ENCODE measurements at regions of chr11 and their contacts with region 1.

Region 1: GRCh38 chr11:1832211-1832919 is 2.4 kb upstream of the SYT8 start:
- DNase-seq: peak in 1 of 2 donors; percentile 73
- ATAC-seq: peak; percentile 74 to 85 (median 80)
- H3K4me3 ChIP-seq: peak overlapping the region in 8 of 10 donors; percentile 8 to 35 (median 28)
- H3K27ac ChIP-seq: peak overlapping the region in 3 of 10 donors; percentile 21 to 37 (median 26)
- H3K4me1 ChIP-seq: peaks cover 1 to 20% (median 11%) of the 10 kb centered on the region in 9 donors
- H3K27me3 ChIP-seq: peaks cover 0 to 40% (median 12%) of the 10 kb centered on the region in 7 donors
- CTCF ChIP-seq: peak; percentile 94 to 100 (median 98)

Region 2: GRCh38 chr11:1652771-1653540 is 179.4 kb before region 1 on chr11:
- intact Hi-C with region 1: loop called in 9 of 10 experiments (anchors 1 to 5 kb)
- DNase-seq: peak; percentile 66 to 79
- ATAC-seq: peak; percentile 80 to 92 (median 85)
- H3K4me3 ChIP-seq: no peak overlapping the region
- H3K27ac ChIP-seq: no peak overlapping the region
- H3K4me1 ChIP-seq: peaks cover 0 to 6% (median 4%) of the 10 kb centered on the region in 9 donors
- H3K27me3 ChIP-seq: peaks cover 0 to 31% (median 11%) of the 10 kb centered on the region in 7 donors
- CTCF ChIP-seq: peak; percentile 94 to 99 (median 98)

Region 3: DNA sequence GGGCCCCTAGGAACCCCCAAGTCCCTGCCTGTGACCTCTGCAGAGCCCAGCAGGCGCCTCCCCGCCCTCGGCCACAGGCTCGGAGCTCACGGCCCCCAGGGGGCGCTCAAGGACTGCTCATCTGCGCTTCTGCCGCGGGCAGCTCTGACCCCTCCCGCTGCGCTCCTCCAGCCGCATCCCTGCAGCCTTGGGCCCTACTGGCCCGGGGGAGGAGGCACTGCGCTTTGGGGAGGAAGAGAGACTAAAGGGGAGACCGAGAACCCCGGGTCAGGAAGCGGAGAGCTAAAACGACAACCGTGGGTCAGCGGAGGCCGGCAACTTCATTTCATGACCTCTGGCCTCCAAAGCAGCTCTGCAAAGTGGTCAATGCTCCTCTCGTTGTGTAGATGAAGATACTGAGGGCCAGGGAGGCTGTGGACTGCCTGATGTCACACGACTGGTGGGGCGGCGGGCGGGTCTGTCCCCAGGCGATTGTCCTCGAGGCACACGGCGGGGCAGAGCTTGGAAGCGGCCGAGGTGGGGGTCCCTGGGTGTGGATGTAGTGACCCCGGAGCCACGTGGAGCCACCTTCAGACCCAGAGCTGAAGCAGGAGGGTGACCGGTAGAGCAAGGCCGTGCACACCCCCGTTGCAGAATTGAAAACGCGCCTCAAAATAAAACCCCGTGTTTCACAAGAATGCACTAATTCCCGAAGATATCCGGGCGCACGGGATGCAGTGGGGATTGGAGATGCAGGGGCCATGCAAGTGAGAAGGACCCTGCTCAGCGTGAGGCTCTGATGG is 138.1 kb before region 1 on chr11:
- intact Hi-C with region 1: loop called (anchors 1 to 2 kb)
- DNase-seq: peak; percentile 89 to 94
- ATAC-seq: peak; percentile 95 to 99 (median 97)
- H3K4me3 ChIP-seq: peak overlapping the region in 9 of 10 donors; percentile 26 to 64 (median 48)
- H3K27ac ChIP-seq: peak overlapping the region; percentile 3 to 80 (median 71)
- H3K4me1 ChIP-seq: peaks cover 5 to 15% (median 9%) of the 10 kb centered on the region in 9 donors
- H3K27me3 ChIP-seq: peaks cover 0 to 22% (median 0%) of the 10 kb centered on the region in 7 donors
- CTCF ChIP-seq: peak; percentile 93 to 99 (median 95)

Region 4: GRCh38 chr11:1706634-1707400 is 125.5 kb before region 1 on chr11:
- intact Hi-C with region 1: loop called in 2 of 10 experiments (anchors 1 to 5 kb)
- DNase-seq: no peak
- ATAC-seq: peak in 7 of 8 donors; percentile 42 to 85 (median 66)
- H3K4me3 ChIP-seq: no peak overlapping the region
- H3K27ac ChIP-seq: no peak overlapping the region
- H3K4me1 ChIP-seq: no peaks in the 10 kb centered on the region
- H3K27me3 ChIP-seq: peaks cover 0 to 15% (median 0%) of the 10 kb centered on the region in 7 donors
- CTCF ChIP-seq: peak in 7 of 9 donors; percentile 28 to 54 (median 42)

Region 5: DNA sequence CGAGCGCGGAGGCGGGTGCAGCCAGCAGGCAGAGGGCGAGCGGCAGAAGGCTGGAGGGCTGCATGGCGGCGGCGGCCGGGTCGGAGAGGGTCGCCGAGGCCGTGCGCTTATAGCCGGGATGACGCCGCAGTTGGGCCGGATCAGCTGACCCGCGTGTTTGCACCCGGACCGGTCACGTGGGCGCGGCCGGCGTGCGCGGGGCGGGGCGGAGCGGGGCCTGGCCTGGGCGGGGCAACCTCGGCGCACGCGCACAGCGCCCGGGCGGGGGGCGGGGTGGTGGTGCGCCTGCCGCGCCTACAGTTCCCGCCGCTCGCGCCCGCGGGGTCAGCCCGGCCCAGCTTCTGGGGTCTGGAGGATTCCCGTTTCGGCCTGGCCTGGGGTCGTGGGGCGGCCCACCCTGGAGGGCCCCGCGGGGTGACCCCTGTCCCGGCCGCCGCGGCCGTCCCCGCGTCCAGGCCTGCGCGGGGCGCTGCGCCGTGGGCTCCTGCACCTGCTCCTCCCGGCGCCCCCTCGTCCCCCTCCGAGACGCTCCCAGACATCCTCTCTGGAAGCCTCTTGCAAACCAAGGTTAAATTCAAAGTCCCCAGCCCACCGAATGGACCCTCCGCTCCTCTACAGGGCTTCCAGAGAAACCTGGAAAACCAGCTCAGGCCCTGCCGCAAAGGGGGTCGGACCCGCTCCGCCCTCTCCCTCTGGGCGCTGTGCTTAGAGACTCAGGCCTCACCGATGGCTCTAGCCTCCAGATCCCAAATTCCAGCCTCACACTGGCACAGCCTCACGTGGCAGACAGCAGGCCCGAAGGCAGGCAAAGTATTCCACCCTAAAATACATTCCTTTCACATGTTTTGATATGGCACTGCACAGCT is 68.3 kb before region 1 on chr11 and contains the start of gene CTSD:
- intact Hi-C with region 1: loop called in 2 of 10 experiments (anchors 5 to 10 kb)
- DNase-seq: peak; percentile 88 to 94
- ATAC-seq: peak; percentile 62 to 88 (median 75)
- H3K4me3 ChIP-seq: peak within 1 kb of the TSS; percentile 79 to 100 (median 100)
- H3K27ac ChIP-seq: peak within 1 kb of the TSS; percentile 93 to 99 (median 97)
- H3K4me1 ChIP-seq: peaks cover 29 to 52% (median 51%) of the 10 kb centered on the region in 9 donors
- H3K27me3 ChIP-seq: no peaks in the 10 kb centered on the region
- CTCF ChIP-seq: peak in 2 of 9 donors; percentile 28 to 30
- total RNA-seq, gene CTSD: 501 to 1,070 (median 786) TPM